ENCODE measurements at regions of chr20 and their contacts with region 1.

Region 1: GRCh38 chr20:23606652-23607049 is 934 bp upstream of the CST9 start:
- DNase-seq: peak; percentile 74
- H3K4me3 ChIP-seq: no peak overlapping the region
- H3K27ac ChIP-seq: no peak overlapping the region
- H3K4me1 ChIP-seq: no peaks in the 10 kb centered on the region
- H3K27me3 ChIP-seq: no peaks in the 10 kb centered on the region
- CTCF ChIP-seq: peak; percentile 63 to 91 (median 86)
- POLR2A ChIP-seq: no peak

Region 2: GRCh38 chr20:23441850-23442313 is 164.8 kb before region 1 on chr20:
- intact Hi-C with region 1: loop called (anchors 5 kb)
- DNase-seq: peak; percentile 55
- H3K4me3 ChIP-seq: no peak overlapping the region
- H3K27ac ChIP-seq: no peak overlapping the region
- H3K4me1 ChIP-seq: no peaks in the 10 kb centered on the region
- H3K27me3 ChIP-seq: no peaks in the 10 kb centered on the region
- CTCF ChIP-seq: peak; percentile 54 to 90 (median 74)
- POLR2A ChIP-seq: no peak

Region 3: DNA sequence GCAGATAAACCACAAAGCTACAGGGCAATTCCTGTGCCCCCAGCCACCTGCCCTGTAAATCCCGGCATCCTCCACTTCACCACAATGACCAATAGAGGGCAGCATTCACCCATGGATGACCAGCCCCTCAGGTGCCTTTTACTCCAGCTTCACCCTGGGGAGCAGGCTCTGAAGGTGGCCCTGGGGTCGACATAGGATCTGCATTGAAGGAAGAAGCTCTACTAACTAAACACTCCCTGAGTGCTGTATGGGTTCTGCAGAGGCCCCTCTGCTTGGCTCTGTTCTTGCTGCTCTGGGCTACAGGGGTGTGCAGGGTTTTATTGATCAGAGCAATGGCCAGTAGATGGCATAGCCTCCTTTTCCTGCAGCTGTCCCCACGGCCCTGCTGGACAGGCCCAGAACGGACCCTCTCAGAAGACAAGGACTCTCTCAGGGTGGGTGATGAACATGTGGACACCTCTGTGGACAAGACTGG is 61.9 kb after region 1 on chr20:
- intact Hi-C with region 1: no loop called
- DNase-seq: peak; percentile 51
- H3K4me3 ChIP-seq: no peak overlapping the region
- H3K27ac ChIP-seq: no peak overlapping the region
- H3K4me1 ChIP-seq: no peaks in the 10 kb centered on the region
- H3K27me3 ChIP-seq: no peaks in the 10 kb centered on the region
- CTCF ChIP-seq: peak; percentile 65 to 83 (median 68)
- POLR2A ChIP-seq: no peak

Measured in prostate gland (tissue), 2 donors.